SK-N-SH (cell line): ENCODE measurements at regions of chr11 and their contacts with region 1.

Region 1: DNA sequence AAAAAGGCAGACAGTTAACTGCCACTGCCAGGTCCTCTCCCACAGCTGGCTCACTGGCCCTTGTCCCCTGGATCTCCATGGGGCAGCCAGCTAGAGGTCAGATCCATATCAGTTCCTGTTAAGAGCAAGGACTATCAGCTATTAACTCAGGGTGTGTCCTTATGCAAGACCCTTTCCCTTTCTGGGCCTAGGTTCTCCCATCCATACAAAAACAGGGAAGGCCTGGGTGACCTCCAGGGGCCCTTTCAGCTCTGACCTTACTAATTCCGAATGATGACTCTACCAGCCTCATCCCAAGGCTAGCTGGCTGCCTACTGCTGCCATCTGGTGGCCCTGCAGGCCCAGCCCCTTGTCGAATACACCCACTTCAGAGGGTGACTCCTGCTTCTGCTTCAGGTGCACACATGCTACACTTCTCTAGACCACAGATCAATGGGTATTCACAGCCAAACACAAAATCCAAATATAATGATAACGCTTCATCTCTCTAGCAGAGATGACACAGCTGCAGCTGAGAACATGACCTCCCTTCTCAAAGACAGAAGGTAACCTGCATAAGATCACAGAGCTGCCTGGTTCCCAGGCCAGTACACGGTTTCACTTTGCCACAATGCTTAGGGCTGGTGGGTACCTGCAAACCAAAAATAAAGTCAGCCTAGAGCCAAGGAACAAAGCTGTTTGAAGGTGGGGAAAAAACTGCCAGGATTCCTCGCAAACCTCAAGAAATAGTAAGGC is 34.1 kb downstream of the SERGEF start:
- DNase-seq: peak; percentile 61
- H3K4me3 ChIP-seq: no peak overlapping the region; a peak in 1 of 4 replicates
- H3K27ac ChIP-seq: no peak overlapping the region
- H3K4me1 ChIP-seq: peaks cover 0 to 5% of the 10 kb centered on the region in 2 experiments; a peak in 1 of 4 replicates
- H3K27me3 ChIP-seq: no peaks in the 10 kb centered on the region
- CTCF ChIP-seq: peak; percentile 85
- EP300 ChIP-seq: no peak
- RAD21 ChIP-seq: peak; percentile 79

Region 2: GRCh38 chr11:17598700-17599459 is 379.8 kb before region 1 on chr11:
- CTCF ChIA-PET with region 1: interaction called, 181 read pairs
- POLR2A ChIA-PET with region 1: no interaction called
- DNase-seq: peak; percentile 85
- H3K4me3 ChIP-seq: no peak overlapping the region; a peak in 1 of 4 replicates
- H3K27ac ChIP-seq: no peak overlapping the region
- H3K4me1 ChIP-seq: no peaks in the 10 kb centered on the region; a peak in 1 of 4 replicates
- H3K27me3 ChIP-seq: no peaks in the 10 kb centered on the region
- CTCF ChIP-seq: peak; percentile 87
- EP300 ChIP-seq: no peak
- RAD21 ChIP-seq: peak; percentile 96

Region 3: DNA sequence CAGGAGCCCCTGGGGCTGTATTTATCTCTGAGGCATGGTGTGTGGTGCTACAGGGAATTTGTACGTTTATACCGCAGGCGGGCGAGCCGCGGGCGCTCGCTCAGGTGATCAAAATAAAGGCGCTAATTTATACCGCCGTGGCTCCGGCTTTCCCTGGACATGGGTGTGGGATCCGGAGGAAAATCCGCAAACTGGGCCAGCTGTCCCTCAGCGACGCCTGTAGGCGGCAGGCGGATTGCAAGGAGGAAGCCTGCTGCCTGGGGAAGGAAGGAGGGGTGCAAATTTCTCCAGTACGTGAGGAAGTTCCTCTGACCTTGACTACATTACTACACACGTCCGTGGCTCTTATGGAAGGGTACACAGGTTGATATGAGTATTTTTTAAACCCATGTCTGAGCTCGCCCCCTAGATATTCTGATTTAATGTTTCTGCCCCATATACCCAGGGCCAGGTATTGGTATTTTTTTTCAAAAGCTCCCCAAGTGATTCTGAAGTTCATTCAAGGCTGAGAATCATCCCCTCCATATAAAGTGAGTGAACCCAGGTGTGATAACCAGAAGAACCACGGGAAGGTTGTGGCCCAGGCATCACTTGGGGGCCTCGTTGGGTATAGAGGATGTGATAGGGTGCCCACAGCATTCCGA is 256.6 kb before region 1 on chr11:
- CTCF ChIA-PET with region 1: interaction called, 82 read pairs
- POLR2A ChIA-PET with region 1: no interaction called
- DNase-seq: peak; percentile 70
- H3K4me3 ChIP-seq: no peak overlapping the region
- H3K27ac ChIP-seq: no peak overlapping the region
- H3K4me1 ChIP-seq: peaks cover 0 to 6% of the 10 kb centered on the region in 2 experiments; a peak in 1 of 4 replicates
- H3K27me3 ChIP-seq: peaks cover 54% of the 10 kb centered on the region
- CTCF ChIP-seq: peak; percentile 46; the same call in 1 of the 2 replicates
- EP300 ChIP-seq: no peak
- RAD21 ChIP-seq: peak; percentile 43

Region 4: DNA sequence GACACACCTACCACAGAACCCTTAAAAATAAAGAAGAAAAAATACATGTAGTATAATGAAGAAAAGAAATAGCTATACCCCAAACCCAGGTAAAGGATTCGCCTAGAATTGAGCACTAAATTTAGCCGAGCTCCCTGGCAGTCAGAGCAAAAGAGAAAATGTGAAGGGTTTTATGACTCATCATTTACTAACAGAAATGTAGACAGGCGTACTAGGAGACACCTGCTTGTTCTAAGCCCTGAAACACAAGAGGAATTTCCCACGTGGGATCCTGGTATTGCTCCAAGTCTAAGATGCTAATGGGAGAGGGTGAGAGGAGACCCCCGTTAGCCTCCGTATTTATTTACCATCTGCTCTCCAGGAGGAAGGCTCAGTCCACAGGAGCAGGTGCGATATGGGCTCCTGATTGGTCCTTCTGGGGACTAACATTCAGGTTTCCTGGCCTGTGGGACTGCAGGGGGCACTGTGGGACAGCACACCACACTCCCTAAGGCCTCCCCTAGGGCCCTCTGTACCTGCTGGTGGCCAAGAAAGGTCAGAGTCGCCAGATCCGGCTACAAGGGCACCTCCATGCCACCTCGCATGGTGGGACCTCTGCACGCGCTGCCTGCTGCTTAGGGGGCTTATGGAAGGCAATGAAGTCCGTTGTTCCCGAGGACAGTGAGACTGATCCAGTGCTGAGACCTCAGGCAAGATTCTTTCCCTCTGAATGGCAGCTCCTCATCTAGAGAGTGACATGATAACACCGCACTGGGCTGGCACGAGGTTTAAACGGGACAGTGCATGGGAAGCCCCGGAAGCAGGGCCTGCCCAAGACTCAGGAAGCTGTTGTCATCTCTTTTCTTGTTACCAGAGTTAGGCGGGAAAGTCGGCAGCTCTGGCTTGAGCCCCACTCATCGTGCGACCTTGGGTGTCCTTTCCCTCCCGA is 218.4 kb before region 1 on chr11:
- CTCF ChIA-PET with region 1: interaction called, 28 read pairs
- POLR2A ChIA-PET with region 1: no interaction called
- DNase-seq: peak; percentile 68
- H3K4me3 ChIP-seq: no peak overlapping the region
- H3K27ac ChIP-seq: no peak overlapping the region
- H3K4me1 ChIP-seq: peaks cover 0 to 12% of the 10 kb centered on the region in 2 experiments; a peak in 2 of 4 replicates
- H3K27me3 ChIP-seq: 0 out of 2 replicates have a peak, but pooled peaks cover 7% of the 10 kb centered on the region
- CTCF ChIP-seq: peak; percentile 64
- EP300 ChIP-seq: no peak
- RAD21 ChIP-seq: peak; percentile 72

Region 5: DNA sequence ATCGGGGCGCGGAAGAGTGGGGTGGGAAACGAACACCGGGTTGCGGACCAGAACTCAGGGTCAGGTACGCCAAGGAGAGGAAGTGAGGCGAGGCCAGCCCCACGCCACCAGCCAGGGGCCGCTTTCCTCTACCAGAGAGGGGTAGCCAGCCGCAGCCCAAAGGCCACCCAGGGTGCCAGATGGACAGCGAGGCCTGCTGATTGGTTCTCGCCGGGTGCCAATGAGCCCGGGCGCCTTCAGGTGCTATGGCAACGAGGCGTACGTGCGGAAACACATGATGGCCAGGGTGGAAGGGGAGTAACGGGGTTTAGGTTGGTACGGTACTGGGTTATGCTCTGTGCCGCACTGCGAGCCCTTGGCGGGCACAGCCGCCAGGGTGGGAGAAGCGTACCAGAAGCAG is 94.8 kb before region 1 on chr11:
- CTCF ChIA-PET with region 1: no interaction called
- POLR2A ChIA-PET with region 1: no interaction called
- DNase-seq: no peak
- H3K4me3 ChIP-seq: no peak overlapping the region
- H3K27ac ChIP-seq: no peak overlapping the region
- H3K4me1 ChIP-seq: no peaks in the 10 kb centered on the region; a peak in 2 of 4 replicates
- H3K27me3 ChIP-seq: no peaks in the 10 kb centered on the region
- CTCF ChIP-seq: no peak
- EP300 ChIP-seq: no peak
- RAD21 ChIP-seq: no peak

Region 6: GRCh38 chr11:17932472-17932871 is 46.2 kb before region 1 on chr11:
- CTCF ChIA-PET with region 1: interaction called, 16 read pairs
- POLR2A ChIA-PET with region 1: no interaction called
- DNase-seq: no peak
- H3K4me3 ChIP-seq: no peak overlapping the region; a peak in 1 of 4 replicates
- H3K27ac ChIP-seq: no peak overlapping the region
- H3K4me1 ChIP-seq: peaks cover 0 to 3% of the 10 kb centered on the region in 2 experiments; a peak in 3 of 4 replicates
- H3K27me3 ChIP-seq: no peaks in the 10 kb centered on the region
- CTCF ChIP-seq: peak; percentile 13; the same call in 1 of the 2 replicates
- EP300 ChIP-seq: no peak
- RAD21 ChIP-seq: no peak

Region 7: DNA sequence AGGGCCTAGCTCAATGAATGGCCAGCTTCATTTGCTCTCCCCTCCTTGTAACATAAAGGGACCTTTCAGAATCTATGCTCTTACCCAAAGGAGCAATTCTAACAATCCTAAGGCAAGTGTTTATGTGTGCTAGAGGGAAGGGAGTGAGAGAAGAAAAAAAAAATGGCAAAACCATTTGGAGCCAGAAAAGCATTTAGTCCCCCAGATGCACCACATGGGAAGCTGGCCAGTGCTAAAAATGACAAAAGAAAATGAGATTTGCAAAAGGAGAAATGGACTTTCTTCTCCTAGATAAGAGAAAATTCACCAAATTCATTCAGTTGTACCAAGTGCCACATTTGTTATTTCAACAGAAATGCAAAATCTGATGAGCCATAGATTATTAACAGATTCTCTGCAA is 18.6 kb before region 1 on chr11:
- CTCF ChIA-PET with region 1: interaction called, 42 read pairs
- POLR2A ChIA-PET with region 1: no interaction called
- DNase-seq: no peak
- H3K4me3 ChIP-seq: no peak overlapping the region
- H3K27ac ChIP-seq: no peak overlapping the region
- H3K4me1 ChIP-seq: no peaks in the 10 kb centered on the region; a peak in 1 of 4 replicates
- H3K27me3 ChIP-seq: no peaks in the 10 kb centered on the region
- CTCF ChIP-seq: no peak
- EP300 ChIP-seq: no peak
- RAD21 ChIP-seq: no peak

Region 8: GRCh38 chr11:17991783-17992433 is 13.2 kb after region 1 on chr11:
- CTCF ChIA-PET with region 1: interaction called, 53 read pairs
- POLR2A ChIA-PET with region 1: no interaction called
- DNase-seq: peak; percentile 66
- H3K4me3 ChIP-seq: no peak overlapping the region; a peak in 1 of 4 replicates
- H3K27ac ChIP-seq: no peak overlapping the region
- H3K4me1 ChIP-seq: no peaks in the 10 kb centered on the region
- H3K27me3 ChIP-seq: no peaks in the 10 kb centered on the region
- CTCF ChIP-seq: peak; percentile 93
- EP300 ChIP-seq: no peak
- RAD21 ChIP-seq: peak; percentile 78